Activated CD4-positive, alpha-beta memory T cell treated with anti-CD3 and anti-CD28 coated beads for 36 hours (primary cell): ENCODE measurements at regions of chr12 and their contacts with region 1.

Region 1: DNA sequence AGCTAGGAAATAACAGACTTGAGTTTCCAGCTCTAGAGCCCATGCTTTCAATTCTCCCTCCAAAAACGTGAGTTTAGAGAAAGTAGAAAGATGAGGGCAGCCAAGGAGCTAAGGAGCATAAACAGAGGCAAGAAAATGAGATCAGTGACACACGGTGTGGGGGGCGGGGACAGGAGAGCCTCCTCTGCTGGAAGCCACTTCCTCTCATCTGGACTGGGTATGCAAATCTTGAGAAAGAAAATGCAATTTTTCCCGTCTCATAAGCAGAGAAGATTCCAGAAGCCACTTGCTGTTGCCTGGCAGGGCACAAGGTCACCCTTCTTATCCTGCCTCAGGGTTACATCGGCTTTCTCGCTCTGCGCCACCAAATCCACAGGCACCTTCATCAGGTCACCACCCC is 6.0 kb downstream of the OR10P1 start:
- DNase-seq: peak; percentile 59
- H3K4me3 Mint-ChIP-seq: no peak overlapping the region
- H3K27ac Mint-ChIP-seq: no peak overlapping the region
- H3K4me1 Mint-ChIP-seq: peaks cover 31% of the 10 kb centered on the region
- H3K27me3 Mint-ChIP-seq: no peaks in the 10 kb centered on the region

Region 2: DNA sequence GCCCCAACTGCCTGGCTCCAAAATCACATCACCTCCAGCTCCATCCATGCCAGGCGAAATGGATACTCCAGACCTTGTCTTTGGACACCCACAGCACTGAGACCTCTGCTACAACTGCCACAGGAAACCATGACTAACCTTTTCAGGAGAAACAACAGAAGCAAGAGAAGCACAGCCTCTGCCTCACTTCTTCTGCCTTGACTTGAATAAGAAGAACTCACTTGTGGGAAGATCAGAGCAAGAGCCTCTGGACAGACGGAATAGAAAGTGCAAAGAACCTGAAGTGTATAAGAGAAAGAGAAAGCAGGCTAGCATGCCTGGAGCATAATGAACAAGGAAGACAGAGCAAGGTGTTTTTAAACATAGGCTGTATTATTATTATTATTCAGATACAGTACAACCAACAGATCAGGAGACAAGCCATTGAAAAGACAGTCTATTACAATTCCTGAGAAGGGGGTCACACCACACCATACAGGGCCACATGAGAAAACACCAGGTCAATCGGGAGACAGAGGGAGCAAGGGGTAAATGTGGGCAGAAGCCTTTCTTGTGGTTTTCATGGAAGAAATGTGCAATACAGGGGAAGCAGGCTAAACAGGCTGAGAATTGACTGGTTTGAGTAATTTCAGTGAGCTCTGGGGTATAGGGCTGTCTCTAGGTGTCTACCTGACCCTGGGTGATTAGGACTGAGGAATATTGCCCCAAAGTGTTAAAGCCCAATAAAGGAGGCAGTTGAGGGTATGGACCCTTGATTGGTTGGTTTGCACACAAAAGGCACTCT is 13.4 kb before region 1 on chr12:
- CTCF ChIA-PET with region 1: interaction called, 7 read pairs
- POLR2A ChIA-PET with region 1: interaction called, 3 read pairs
- intact Hi-C with region 1: loop called (anchors 1 kb)
- DNase-seq: peak; percentile 48
- H3K4me3 Mint-ChIP-seq: peak overlapping the region; percentile 1
- H3K27ac Mint-ChIP-seq: peak overlapping the region; percentile 35
- H3K4me1 Mint-ChIP-seq: peaks cover 22% of the 10 kb centered on the region
- H3K27me3 Mint-ChIP-seq: peaks cover 9% of the 10 kb centered on the region

Region 3: GRCh38 chr12:55715833-55716581 is 73.3 kb after region 1 on chr12 and contains the start of gene BLOC1S1:
- CTCF ChIA-PET with region 1: interaction called, 3 read pairs
- POLR2A ChIA-PET with region 1: no interaction called
- intact Hi-C with region 1: loop called (anchors 5 kb)
- DNase-seq: peak; percentile 96
- H3K4me3 Mint-ChIP-seq: peak within 1 kb of the TSS; percentile 90
- H3K27ac Mint-ChIP-seq: peak within 1 kb of the TSS; percentile 89
- H3K4me1 Mint-ChIP-seq: peaks cover 30% of the 10 kb centered on the region
- H3K27me3 Mint-ChIP-seq: peaks cover 2% of the 10 kb centered on the region
- total RNA-seq, gene BLOC1S1: 153 to 162 TPM